Aorta (tissue), 5 donors: ENCODE measurements at regions of chr15 and their contacts with region 1.

Region 1: DNA sequence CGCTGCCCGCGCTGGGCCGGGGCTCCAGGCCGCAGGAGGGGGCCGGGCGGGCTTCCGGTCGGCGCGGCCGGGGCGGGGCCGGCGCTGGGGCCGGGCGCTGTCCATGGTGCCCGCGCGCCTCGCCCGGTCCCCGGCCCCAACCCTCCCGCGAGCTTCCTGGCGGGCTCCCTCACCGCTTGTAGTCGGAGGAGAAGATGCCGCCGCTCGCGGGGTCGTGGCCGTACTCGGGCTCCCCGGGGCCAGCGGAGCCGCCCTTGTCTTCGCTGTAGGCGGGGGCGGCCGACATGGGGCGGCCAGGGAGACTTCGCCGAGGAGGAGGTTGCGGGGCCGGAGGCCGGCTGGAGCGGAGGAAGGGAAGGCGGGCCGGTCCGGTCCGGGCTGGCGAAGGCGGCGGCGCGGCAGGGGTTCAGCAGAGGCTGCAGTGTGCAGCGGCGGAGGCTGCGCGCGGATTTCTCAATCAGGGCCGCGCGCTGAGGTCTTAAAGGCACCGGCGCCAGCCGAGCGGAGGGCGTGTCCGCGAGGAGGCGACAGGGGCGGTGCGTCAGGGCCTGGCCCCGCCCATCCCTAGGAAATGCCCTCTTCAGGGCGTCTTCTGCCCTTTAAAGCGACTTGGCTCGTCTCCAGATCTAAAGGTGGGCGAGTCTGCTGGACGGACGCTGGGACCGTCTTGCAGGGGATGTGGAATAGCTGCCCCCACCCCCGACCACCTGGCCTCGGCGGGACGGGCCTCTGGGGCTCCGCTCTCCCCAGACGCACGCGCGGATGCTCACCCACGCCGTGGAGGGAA is at the start of gene AP3B2:
- DNase-seq: peak; percentile 73 to 87
- ATAC-seq: peak; percentile 91
- H3K4me3 ChIP-seq: peak within 1 kb of the TSS; percentile 36 to 68
- H3K27ac ChIP-seq: no peak within 1 kb of the TSS
- H3K4me1 ChIP-seq: no peaks in the 10 kb centered on the region
- H3K27me3 ChIP-seq: no peaks in the 10 kb centered on the region
- total RNA-seq, gene AP3B2: 0.16 to 0.42 TPM

Region 2: GRCh38 chr15:82663186-82663600 is 46.4 kb before region 1 on chr15:
- intact Hi-C with region 1: loop called in 1 of 2 experiments (anchors 5 kb)
- DNase-seq: peak in 1 of 2 donors; percentile 56
- ATAC-seq: no peak
- H3K4me3 ChIP-seq: no peak overlapping the region
- H3K27ac ChIP-seq: no peak overlapping the region
- H3K4me1 ChIP-seq: no peaks in the 10 kb centered on the region
- H3K27me3 ChIP-seq: no peaks in the 10 kb centered on the region

Region 3: GRCh38 chr15:82823049-82823448 is 113.4 kb after region 1 on chr15:
- intact Hi-C with region 1: no loop called
- DNase-seq: no peak
- ATAC-seq: no peak
- H3K4me3 ChIP-seq: no peak overlapping the region
- H3K27ac ChIP-seq: no peak overlapping the region
- H3K4me1 ChIP-seq: no peaks in the 10 kb centered on the region
- H3K27me3 ChIP-seq: no peaks in the 10 kb centered on the region